Right cardiac atrium (tissue), 5 donors: ENCODE measurements at regions of chr10 and their contacts with region 1.

Region 1: DNA sequence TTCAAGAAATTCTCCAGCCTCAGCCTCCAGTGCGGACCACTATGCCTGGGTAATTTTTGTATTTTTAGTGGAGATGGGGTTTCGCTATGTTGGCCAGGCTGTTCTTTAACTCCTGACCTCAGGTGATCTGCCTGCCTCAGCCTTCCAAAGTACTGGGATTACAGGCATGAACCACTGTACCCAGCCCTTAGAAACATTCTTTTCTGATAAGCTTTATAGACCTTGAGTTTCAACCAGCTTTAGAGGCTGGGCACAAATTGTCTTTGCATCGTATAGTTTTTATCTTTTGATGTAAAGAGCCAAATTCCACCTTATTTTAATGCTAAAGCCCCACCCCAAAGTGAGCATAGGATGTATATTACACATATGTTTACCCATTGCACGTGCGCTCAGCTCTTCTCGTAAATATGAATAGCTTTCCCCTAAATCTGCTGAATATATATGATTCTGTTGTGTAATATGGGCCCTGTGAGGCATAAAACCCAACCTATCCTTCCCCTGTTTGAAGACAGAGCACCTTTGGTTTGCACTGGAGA is 124.8 kb downstream of the ADK start:
- DNase-seq: no peak
- ATAC-seq: no peak
- H3K4me3 ChIP-seq: no peak overlapping the region
- H3K27ac ChIP-seq: no peak overlapping the region
- H3K4me1 ChIP-seq: peaks cover 3% of the 10 kb centered on the region
- H3K27me3 ChIP-seq: no peaks in the 10 kb centered on the region

Region 2: GRCh38 chr10:75029857-75030256 is 754.0 kb after region 1 on chr10:
- intact Hi-C with region 1: loop called in 1 of 4 experiments (anchors 10 kb)
- DNase-seq: peak; percentile 67 to 89 (median 78)
- ATAC-seq: peak; percentile 18 to 72
- H3K4me3 ChIP-seq: no peak overlapping the region
- H3K27ac ChIP-seq: no peak overlapping the region
- H3K4me1 ChIP-seq: no peaks in the 10 kb centered on the region
- H3K27me3 ChIP-seq: no peaks in the 10 kb centered on the region